ENCODE measurements at regions of chr17 and their contacts with region 1.

Region 1: DNA sequence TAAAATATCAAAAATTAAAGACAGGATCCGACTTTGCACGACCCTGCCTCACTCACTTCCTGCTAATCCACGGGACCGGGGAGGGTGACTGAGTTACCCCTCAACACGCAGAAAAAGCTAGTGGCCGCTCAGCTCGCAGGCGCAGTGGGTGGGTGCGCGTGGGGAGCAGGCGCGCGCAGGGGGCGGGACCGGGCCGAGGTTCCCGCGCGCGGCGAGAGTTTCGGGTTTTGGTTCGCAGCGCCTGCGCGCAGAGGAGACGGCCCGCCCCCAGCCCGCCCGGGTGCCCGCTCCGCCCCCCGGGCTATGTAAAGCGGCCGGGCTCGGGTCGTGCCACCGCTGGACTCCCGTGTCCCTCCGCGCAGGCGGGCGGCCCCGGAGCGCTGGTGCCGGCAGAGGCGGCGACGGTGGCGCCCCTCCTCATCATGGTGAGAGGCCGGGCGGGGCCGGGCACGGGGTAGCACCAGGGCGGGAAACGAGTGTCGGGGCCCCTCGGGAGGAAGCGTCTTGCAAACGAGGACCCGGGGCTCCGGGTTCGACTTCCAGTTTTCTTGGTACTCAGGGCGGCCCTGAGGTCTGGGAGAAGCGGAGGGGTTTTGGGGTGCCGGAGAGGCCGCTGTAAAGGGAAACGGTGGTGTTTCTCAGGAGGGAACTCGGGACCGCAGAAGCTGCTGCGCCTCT is at the start of gene CNP:
- DNase-seq: peak; percentile 87 to 90 (median 89)
- H3K4me3 ChIP-seq: peak within 1 kb of the TSS; percentile 68 to 69
- H3K4me3 Mint-ChIP-seq: peak within 1 kb of the TSS; percentile 83 to 93 (median 87)
- H3K27ac ChIP-seq: peak within 1 kb of the TSS; percentile 83
- H3K27ac Mint-ChIP-seq: peak within 1 kb of the TSS; percentile 87 to 98 (median 91)
- H3K4me1 ChIP-seq: peaks cover 43% of the 10 kb centered on the region
- H3K4me1 Mint-ChIP-seq: peaks cover 20 to 42% (median 31%) of the 10 kb centered on the region in 4 donors
- H3K27me3 ChIP-seq: no peaks in the 10 kb centered on the region
- H3K27me3 Mint-ChIP-seq: no peaks in the 10 kb centered on the region
- total RNA-seq, gene CNP: 31.0 to 36.9 TPM

Region 2: DNA sequence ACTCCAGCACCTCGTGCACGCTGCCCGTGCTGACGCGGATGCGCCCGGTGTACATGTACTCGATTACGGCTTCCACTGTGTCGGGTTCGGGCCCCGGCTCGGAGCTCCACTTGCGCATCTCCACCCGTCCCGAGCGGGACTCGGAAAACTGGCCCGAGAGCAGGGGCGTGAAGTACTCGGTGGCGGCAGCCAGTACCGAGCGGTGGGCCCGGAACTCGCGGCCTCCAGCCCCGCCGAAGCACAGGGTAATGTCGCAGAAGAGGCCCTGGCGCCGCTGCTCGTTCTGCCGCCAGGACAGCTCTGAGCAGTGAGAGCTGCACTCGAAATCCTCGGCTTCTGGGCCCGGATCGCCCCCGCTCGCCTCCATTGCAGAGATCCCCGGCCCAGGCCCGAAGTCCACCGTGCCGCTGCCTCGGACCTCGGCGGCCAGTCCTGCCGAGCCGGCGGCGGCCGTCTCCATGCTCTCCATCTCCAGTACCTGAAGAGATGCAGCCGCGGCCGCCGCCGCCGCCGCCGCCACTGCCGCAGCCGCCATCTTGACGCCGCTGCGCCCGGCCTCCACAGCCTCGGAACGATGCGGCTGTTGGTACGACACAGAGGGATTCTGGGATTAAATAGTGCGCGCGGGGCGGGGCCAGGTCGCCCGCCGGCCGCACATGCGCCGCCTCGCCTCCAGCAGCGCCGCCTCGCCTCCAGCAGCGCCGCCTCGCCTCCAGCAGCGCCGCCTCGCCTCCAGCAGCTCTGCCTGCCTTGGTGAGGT is 101.6 kb before region 1 on chr17 and contains the start of gene KLHL11:
- CTCF ChIA-PET with region 1: no interaction called
- POLR2A ChIA-PET with region 1: interaction called, 11 read pairs
- intact Hi-C with region 1: loop called (anchors 1 kb)
- DNase-seq: peak; percentile 85 to 88 (median 87)
- H3K4me3 ChIP-seq: peak within 1 kb of the TSS; percentile 26 to 78
- H3K4me3 Mint-ChIP-seq: peak within 1 kb of the TSS in 1 of 8 donors; percentile 82
- H3K27ac ChIP-seq: peak within 1 kb of the TSS; percentile 71
- H3K27ac Mint-ChIP-seq: peak within 1 kb of the TSS in 3 of 7 donors; percentile 89 to 93 (median 92)
- H3K4me1 ChIP-seq: peaks cover 42% of the 10 kb centered on the region
- H3K4me1 Mint-ChIP-seq: peaks cover 11 to 37% (median 19%) of the 10 kb centered on the region in 4 donors
- H3K27me3 ChIP-seq: no peaks in the 10 kb centered on the region
- H3K27me3 Mint-ChIP-seq: no peaks in the 10 kb centered on the region
- total RNA-seq, gene KLHL11: 20.6 to 20.8 TPM

Region 3: DNA sequence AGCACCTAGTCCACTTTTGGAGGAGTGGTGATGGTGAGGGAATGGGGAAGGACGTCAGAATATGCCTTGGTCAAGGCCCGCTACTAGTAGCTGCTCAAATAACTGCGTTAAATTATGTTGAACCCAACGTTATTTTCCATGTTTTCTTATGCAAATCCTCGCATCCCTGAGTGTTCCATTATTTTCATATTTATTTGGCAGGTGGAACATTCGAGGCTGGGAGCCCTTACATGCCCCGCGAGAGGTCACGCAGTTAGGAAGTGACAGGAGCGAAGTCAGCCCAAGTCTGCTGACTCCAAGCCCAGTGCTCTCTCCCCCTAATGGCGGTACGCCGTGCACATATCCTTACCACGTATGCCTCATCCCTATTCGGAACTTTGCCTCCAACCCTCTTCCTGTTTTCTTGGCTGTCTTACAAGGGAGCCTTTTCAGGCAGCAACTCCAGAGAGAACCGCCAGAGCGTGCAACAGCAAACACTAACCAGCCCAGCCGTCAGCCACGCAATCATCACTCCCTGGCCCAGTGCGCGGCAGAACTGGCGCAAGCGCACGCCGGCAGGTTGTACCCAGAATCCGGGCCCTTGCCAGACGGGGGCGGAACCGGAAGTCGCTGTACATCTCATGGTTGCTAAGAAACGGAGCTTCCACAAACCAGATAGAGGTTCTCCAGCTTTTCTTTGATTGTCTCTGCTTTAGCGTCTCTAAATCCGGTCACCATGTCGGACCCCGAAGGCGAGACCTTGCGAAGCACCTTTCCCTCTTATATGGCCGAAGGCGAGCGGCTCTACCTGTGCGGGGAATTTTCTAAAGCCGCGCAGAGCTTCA is 36.4 kb before region 1 on chr17 and contains the start of gene ODAD4:
- CTCF ChIA-PET with region 1: interaction called, 6 read pairs
- POLR2A ChIA-PET with region 1: interaction called, 19 read pairs
- intact Hi-C with region 1: loop called (anchors 1 kb)
- DNase-seq: peak; percentile 94 to 98 (median 98)
- H3K4me3 ChIP-seq: peak within 1 kb of the TSS; percentile 73 to 80
- H3K4me3 Mint-ChIP-seq: peak within 1 kb of the TSS; percentile 90 to 99 (median 98)
- H3K27ac ChIP-seq: peak within 1 kb of the TSS; percentile 85
- H3K27ac Mint-ChIP-seq: peak within 1 kb of the TSS; percentile 91 to 100 (median 99)
- H3K4me1 ChIP-seq: peaks cover 23% of the 10 kb centered on the region
- H3K4me1 Mint-ChIP-seq: peaks cover 16 to 35% (median 23%) of the 10 kb centered on the region in 4 donors
- H3K27me3 ChIP-seq: no peaks in the 10 kb centered on the region
- H3K27me3 Mint-ChIP-seq: no peaks in the 10 kb centered on the region
- total RNA-seq, gene ODAD4: 0.20 TPM in 1 of 2 experiments, not detected in the other

Region 4: GRCh38 chr17:42067351-42068091 is 100.9 kb after region 1 on chr17:
- CTCF ChIA-PET with region 1: interaction called, 13 read pairs
- POLR2A ChIA-PET with region 1: interaction called, 3 read pairs
- intact Hi-C with region 1: loop called (anchors 1 kb)
- DNase-seq: peak; percentile 48 to 66 (median 59)
- H3K4me3 ChIP-seq: no peak overlapping the region
- H3K4me3 Mint-ChIP-seq: no peak overlapping the region
- H3K27ac ChIP-seq: no peak overlapping the region
- H3K27ac Mint-ChIP-seq: no peak overlapping the region
- H3K4me1 ChIP-seq: peaks cover 18% of the 10 kb centered on the region
- H3K4me1 Mint-ChIP-seq: peaks cover 2 to 8% (median 6%) of the 10 kb centered on the region in 4 donors
- H3K27me3 ChIP-seq: peaks cover 13% of the 10 kb centered on the region
- H3K27me3 Mint-ChIP-seq: peaks cover 8 to 15% of the 10 kb centered on the region in 2 donors

Region 5: GRCh38 chr17:42120770-42121769 is 154.5 kb after region 1 on chr17 and contains the start of gene KAT2A:
- CTCF ChIA-PET with region 1: interaction called, 39 read pairs
- POLR2A ChIA-PET with region 1: interaction called, 4 read pairs
- intact Hi-C with region 1: loop called (anchors 1 kb)
- DNase-seq: peak; percentile 61 to 71 (median 68)
- H3K4me3 ChIP-seq: peak within 1 kb of the TSS in 1 of 2 donors; percentile 43
- H3K4me3 Mint-ChIP-seq: peak within 1 kb of the TSS; percentile 72 to 82 (median 77)
- H3K27ac ChIP-seq: peak within 1 kb of the TSS; percentile 49
- H3K27ac Mint-ChIP-seq: peak within 1 kb of the TSS in 6 of 7 donors; percentile 19 to 81 (median 67)
- H3K4me1 ChIP-seq: peaks cover 11% of the 10 kb centered on the region
- H3K4me1 Mint-ChIP-seq: peaks cover 13 to 34% (median 23%) of the 10 kb centered on the region in 4 donors
- H3K27me3 ChIP-seq: no peaks in the 10 kb centered on the region
- H3K27me3 Mint-ChIP-seq: no peaks in the 10 kb centered on the region
- total RNA-seq, gene KAT2A: 38.5 to 39.9 TPM

Measured in CD4-positive, alpha-beta memory T cell (primary cell).